GM18951 (cell line): ENCODE measurements at regions of chr11 and their contacts with region 1.

Region 1: GRCh38 chr11:14290422-14290821 is 68.6 kb downstream of the RRAS2 start:
- POLR2A ChIP-seq: no peak

Region 2: GRCh38 chr11:14443638-14444037 is 153.2 kb after region 1 on chr11:
- in situ Hi-C with region 1: loop called (anchors 10 kb)
- POLR2A ChIP-seq: no peak